ENCODE measurements at regions of chr4 and their contacts with region 1.

Region 1: GRCh38 chr4:158193171-158193749 is 17.0 kb upstream of the TMEM144 start:
- DNase-seq: no peak
- H3K4me3 ChIP-seq: no peak overlapping the region
- H3K27ac ChIP-seq: no peak overlapping the region
- H3K4me1 ChIP-seq: peaks cover 0 to 17% (median 0%) of the 10 kb centered on the region in 3 donors
- H3K27me3 ChIP-seq: no peaks in the 10 kb centered on the region
- CTCF ChIP-seq: peak; percentile 12 to 62 (median 40)
- POLR2A ChIP-seq: no peak

Region 2: GRCh38 chr4:158253350-158253980 is 60.2 kb after region 1 on chr4:
- intact Hi-C with region 1: loop called (anchors 10 kb)
- DNase-seq: no peak
- H3K4me3 ChIP-seq: no peak overlapping the region
- H3K27ac ChIP-seq: no peak overlapping the region
- H3K4me1 ChIP-seq: peaks cover 0 to 3% (median 0%) of the 10 kb centered on the region in 3 donors
- H3K27me3 ChIP-seq: no peaks in the 10 kb centered on the region
- CTCF ChIP-seq: peak; percentile 39 to 61 (median 50)
- POLR2A ChIP-seq: no peak

Region 3: DNA sequence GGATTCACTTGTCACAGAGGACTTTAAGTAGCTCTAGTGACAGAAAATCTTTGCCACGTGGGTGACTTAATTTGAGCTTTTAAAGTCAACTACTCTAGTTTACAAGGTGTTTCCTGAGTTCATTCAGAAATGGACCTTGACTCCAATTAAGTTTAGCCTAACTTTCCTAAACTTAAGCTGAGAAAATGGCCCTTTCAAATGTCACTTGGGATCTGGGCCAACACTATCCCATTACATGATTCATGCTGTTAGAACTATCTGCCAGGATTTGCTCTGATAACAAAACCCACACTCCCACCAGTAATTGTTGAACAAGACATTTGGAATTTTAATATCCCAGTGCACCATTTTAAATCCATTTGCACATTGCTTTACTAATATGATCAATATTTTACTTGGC is 437.6 kb after region 1 on chr4:
- intact Hi-C with region 1: no loop called
- DNase-seq: no peak
- H3K4me3 ChIP-seq: no peak overlapping the region
- H3K27ac ChIP-seq: no peak overlapping the region
- H3K4me1 ChIP-seq: no peaks in the 10 kb centered on the region
- H3K27me3 ChIP-seq: no peaks in the 10 kb centered on the region
- CTCF ChIP-seq: no peak
- POLR2A ChIP-seq: no peak